ENCODE measurements at regions of chr10 and their contacts with region 1.

Region 1: DNA sequence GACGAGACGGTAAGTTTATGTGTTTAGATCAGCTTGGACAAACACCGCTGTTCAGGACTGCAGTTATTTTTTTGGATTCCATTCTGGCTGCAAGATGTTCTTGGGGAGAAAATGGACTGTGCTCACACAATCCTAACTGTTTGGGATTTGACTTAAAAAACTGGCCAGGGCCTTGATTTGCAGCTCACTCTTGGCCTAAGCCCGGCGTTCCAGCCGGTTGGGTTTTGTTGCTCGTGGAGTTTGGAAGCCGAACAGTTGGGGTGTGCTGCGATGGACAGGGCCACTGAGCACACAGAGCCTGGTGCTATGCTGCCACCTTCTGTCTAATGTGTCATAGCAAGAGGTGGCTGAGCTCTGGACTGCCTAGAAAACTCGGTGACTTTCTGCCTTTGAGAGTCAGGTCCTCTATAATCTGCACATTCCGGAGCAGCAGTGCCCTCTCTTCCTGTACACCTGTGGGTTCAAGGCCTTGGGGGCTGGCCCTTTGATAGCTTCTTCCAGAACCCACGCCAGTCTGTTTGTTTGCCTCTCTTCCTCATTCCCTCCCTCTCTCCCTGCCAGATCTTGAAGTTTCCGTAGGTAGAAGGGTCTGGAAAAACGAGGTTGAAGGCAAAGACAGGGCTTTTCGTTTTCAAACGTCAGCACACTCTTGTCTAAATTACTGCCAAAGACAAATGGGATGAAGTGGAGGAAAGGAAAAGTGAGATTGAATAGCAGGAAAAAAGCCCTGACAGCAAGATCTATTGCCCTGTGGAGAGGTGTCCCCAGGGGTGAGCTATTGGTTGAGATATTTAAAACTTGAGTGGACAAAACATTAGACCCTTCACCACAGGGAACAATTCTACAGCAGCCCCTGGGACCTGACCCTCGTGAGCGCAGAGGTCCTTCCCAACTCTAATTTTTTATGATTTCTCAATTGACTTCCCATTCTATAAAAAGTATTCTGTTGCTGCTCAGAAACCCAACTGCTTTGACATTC is 167.5 kb upstream of the HABP2 start:
- DNase-seq: peak; percentile 79 to 84
- ATAC-seq: peak; percentile 99 to 100
- H3K4me3 ChIP-seq: no peak overlapping the region
- H3K27ac ChIP-seq: peak overlapping the region in 1 of 2 experiments; percentile 39; a peak in 3 of 6 replicates
- H3K4me1 ChIP-seq: peaks cover 17% of the 10 kb centered on the region; the same call in 2 of the 3 replicates
- CTCF ChIP-seq: peak; percentile 89
- EP300 ChIP-seq: no peak
- POLR2A ChIP-seq: no peak
- RAD21 ChIP-seq: peak; percentile 98 to 99

Region 2: DNA sequence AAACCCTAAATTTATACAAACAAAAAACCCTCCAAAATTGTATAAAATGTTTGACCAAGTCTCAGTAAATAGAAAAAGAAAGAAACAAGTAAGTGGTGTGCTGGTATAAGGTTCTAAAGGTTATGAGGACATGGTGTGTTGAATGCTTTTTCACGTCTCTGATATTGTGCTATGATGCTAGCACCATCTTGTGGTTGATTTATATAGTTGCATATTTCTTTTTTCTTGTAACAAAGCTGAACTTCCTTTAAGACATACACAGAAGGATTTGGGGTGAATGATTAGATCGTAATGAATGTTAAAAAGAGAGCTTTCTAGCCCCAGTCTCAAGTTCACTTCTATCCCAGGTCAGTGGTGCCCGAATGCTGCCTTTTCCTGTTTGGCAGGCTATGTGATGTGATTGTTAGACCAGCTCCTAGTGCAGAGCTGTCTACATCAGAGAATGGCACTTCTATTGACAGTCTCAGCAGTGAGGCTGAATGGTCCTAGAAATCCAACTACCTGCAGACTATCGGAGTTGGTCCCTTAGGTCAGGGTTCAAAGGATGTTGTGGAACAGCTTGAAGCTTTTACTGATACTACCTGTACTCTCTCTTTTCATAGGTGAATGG is 913.3 kb before region 1 on chr10:
- CTCF ChIA-PET with region 1: interaction called, 69 read pairs
- POLR2A ChIA-PET with region 1: no interaction called
- DNase-seq: peak; percentile 55 to 71
- ATAC-seq: peak; percentile 79 to 85
- H3K4me3 ChIP-seq: no peak overlapping the region
- H3K27ac ChIP-seq: peak overlapping the region in 1 of 2 experiments; percentile 42; a peak in 2 of 6 replicates
- H3K4me1 ChIP-seq: peaks cover 14% of the 10 kb centered on the region; the same call in 2 of the 3 replicates
- CTCF ChIP-seq: peak; percentile 89
- EP300 ChIP-seq: no peak
- POLR2A ChIP-seq: no peak
- RAD21 ChIP-seq: peak; percentile 74

Region 3: DNA sequence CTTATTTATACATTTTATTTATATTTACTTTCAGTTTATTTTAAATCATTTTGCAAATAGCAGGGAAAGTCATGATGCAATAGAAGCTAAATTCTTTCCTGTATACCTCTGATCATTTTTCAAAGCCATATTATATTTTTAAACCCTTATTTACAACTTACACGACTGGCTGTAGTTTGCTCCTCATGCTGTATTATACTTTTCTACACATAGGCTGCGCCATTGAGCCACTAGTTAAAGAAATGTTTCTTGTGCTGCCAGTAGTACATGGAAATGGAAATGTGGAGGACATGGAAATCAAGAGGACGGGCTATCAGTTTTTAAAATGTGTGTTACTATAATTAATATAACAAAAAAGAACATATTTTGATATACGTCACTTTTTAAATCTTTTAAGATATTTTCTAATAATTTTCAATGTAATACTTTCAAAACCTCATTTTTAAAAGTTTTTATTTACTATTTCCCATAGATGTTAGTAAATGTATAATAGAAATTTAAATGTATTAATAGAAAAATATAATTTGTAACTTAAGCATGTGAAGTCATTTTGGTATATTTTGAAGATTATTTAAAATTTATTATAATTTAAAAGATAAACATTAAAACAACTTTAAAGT is 819.8 kb before region 1 on chr10:
- CTCF ChIA-PET with region 1: interaction called, 13 read pairs
- POLR2A ChIA-PET with region 1: no interaction called
- DNase-seq: peak; percentile 47 to 81
- ATAC-seq: peak; percentile 71 to 77; a peak in 5 of 6 replicates
- H3K4me3 ChIP-seq: no peak overlapping the region
- H3K27ac ChIP-seq: no peak overlapping the region; a peak in 1 of 6 replicates
- H3K4me1 ChIP-seq: peaks cover 36% of the 10 kb centered on the region
- CTCF ChIP-seq: peak; percentile 85
- EP300 ChIP-seq: no peak
- POLR2A ChIP-seq: no peak
- RAD21 ChIP-seq: peak; percentile 96

Region 4: DNA sequence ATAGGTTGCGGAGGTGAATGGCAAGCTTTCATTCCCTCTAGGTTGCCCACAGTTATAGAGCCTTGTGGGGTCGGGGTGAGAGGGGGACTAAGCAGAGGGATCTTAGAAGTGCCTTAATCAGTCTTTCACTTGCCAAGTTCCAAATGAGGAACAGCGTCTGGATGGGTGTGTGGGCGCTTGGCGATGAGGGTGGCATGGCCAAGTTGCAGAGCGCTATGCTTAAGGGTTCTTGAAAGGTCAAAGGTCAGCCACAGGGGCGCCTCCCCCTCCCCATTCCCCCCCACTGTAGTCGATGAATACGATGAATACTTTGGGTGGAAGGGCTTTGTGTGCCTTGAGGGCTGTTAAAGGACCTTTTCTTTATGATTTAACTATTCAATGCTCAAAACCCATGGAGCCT is 250.3 kb before region 1 on chr10:
- CTCF ChIA-PET with region 1: interaction called, 13 read pairs
- POLR2A ChIA-PET with region 1: no interaction called
- DNase-seq: no peak
- ATAC-seq: no peak
- H3K4me3 ChIP-seq: no peak overlapping the region
- H3K27ac ChIP-seq: peak overlapping the region in 1 of 2 experiments; percentile 90; a peak in 2 of 6 replicates
- H3K4me1 ChIP-seq: peaks cover 59% of the 10 kb centered on the region
- CTCF ChIP-seq: no peak
- EP300 ChIP-seq: no peak
- POLR2A ChIP-seq: no peak
- RAD21 ChIP-seq: no peak

Region 5: DNA sequence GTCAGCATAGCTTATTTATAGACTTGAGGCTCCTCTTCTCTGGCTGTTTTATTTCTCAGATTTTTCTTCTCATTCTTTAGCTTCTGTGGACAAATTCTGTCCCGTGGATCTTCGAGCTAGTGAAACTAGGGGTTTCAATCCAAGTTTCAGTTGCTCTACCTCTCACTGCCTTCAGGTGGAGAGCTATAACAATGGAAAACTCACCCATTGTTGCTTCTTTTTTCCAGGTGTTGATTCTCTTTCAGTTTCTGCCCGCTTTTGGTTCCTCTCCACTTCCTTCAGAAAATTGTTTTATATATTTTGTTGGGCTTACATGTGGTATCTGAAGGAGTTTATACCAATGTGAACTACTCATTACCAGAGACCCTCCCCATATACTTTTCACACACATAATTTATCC is 169.2 kb before region 1 on chr10:
- CTCF ChIA-PET with region 1: interaction called, 19 read pairs
- POLR2A ChIA-PET with region 1: no interaction called
- DNase-seq: peak in 1 of 2 experiments; percentile 9
- ATAC-seq: peak in 1 of 2 experiments; percentile 47; a peak in 1 of 6 replicates
- H3K4me3 ChIP-seq: no peak overlapping the region
- H3K27ac ChIP-seq: no peak overlapping the region
- H3K4me1 ChIP-seq: no peaks in the 10 kb centered on the region
- CTCF ChIP-seq: peak; percentile 16; the same call in 1 of the 3 replicates
- EP300 ChIP-seq: no peak
- POLR2A ChIP-seq: no peak
- RAD21 ChIP-seq: peak; percentile 48 to 65; a peak in 4 of 5 replicates

Region 6: GRCh38 chr10:113399065-113399464 is 13.8 kb after region 1 on chr10:
- CTCF ChIA-PET with region 1: interaction called, 10 read pairs
- POLR2A ChIA-PET with region 1: no interaction called
- DNase-seq: no peak
- ATAC-seq: no peak
- H3K4me3 ChIP-seq: no peak overlapping the region
- H3K27ac ChIP-seq: no peak overlapping the region
- H3K4me1 ChIP-seq: no peaks in the 10 kb centered on the region
- CTCF ChIP-seq: no peak
- EP300 ChIP-seq: no peak
- POLR2A ChIP-seq: no peak
- RAD21 ChIP-seq: no peak

Region 7: DNA sequence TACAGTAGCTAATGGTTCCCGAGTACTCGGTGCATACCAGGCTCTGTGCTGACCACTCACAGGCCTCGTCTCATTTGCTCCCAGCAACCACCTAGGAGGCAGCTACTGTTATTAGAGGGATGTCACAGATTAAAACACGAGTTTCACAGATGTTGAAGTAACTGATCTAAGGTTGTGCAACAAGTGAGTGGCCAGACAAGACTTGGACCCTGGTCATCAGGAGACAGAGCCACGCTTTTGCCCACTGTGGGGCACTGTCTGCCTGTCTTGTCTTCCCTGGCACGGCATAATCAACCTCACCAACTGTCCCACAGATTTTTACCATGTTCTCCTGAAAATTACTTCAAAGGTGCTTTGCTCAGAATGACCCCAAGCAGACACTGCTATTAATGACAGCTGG is 55.9 kb after region 1 on chr10:
- CTCF ChIA-PET with region 1: interaction called, 17 read pairs
- POLR2A ChIA-PET with region 1: no interaction called
- DNase-seq: no peak
- ATAC-seq: peak in 1 of 2 experiments; percentile 64; a peak in 3 of 6 replicates
- H3K4me3 ChIP-seq: no peak overlapping the region
- H3K27ac ChIP-seq: no peak overlapping the region
- H3K4me1 ChIP-seq: no peaks in the 10 kb centered on the region
- CTCF ChIP-seq: no peak
- EP300 ChIP-seq: no peak
- POLR2A ChIP-seq: no peak
- RAD21 ChIP-seq: peak in 1 of 2 experiments; percentile 38; a peak in 1 of 5 replicates

Region 8: GRCh38 chr10:113585949-113586348 is 200.6 kb after region 1 on chr10:
- CTCF ChIA-PET with region 1: no interaction called
- POLR2A ChIA-PET with region 1: no interaction called
- DNase-seq: peak in 1 of 2 experiments; percentile 6
- ATAC-seq: no peak
- H3K4me3 ChIP-seq: no peak overlapping the region
- H3K27ac ChIP-seq: peak overlapping the region in 1 of 2 experiments; percentile 52; a peak in 2 of 6 replicates
- H3K4me1 ChIP-seq: 0 out of 3 replicates have a peak, but pooled peaks cover 5% of the 10 kb centered on the region
- CTCF ChIP-seq: no peak
- EP300 ChIP-seq: no peak
- POLR2A ChIP-seq: no peak
- RAD21 ChIP-seq: no peak

Measured in A549 (cell line).